Mammary epithelial cell (primary cell): ENCODE measurements at regions of chr12 and their contacts with region 1.

Region 1: GRCh38 chr12:117571321-117571720 is 209.9 kb upstream of the NOS1 start:
- DNase-seq: no peak
- H3K4me3 ChIP-seq: no peak overlapping the region
- H3K27ac ChIP-seq: no peak overlapping the region
- H3K4me1 ChIP-seq: no peaks in the 10 kb centered on the region
- H3K27me3 ChIP-seq: no peaks in the 10 kb centered on the region
- CTCF ChIP-seq: no peak

Region 2: GRCh38 chr12:117236456-117237001 is 334.8 kb before region 1 on chr12:
- CTCF ChIA-PET with region 1: no interaction called
- dilution Hi-C with region 1: loop called (anchors 10 kb)
- in situ Hi-C with region 1: no loop called
- intact Hi-C with region 1: no loop called
- DNase-seq: peak; percentile 19
- H3K4me3 ChIP-seq: no peak overlapping the region
- H3K27ac ChIP-seq: no peak overlapping the region
- H3K4me1 ChIP-seq: no peaks in the 10 kb centered on the region
- H3K27me3 ChIP-seq: no peaks in the 10 kb centered on the region
- CTCF ChIP-seq: peak; percentile 46 to 57

Region 3: GRCh38 chr12:117486840-117487659 is 84.3 kb before region 1 on chr12:
- CTCF ChIA-PET with region 1: no interaction called
- dilution Hi-C with region 1: loop called (anchors 5 kb)
- in situ Hi-C with region 1: no loop called
- intact Hi-C with region 1: no loop called
- DNase-seq: no peak
- H3K4me3 ChIP-seq: no peak overlapping the region
- H3K27ac ChIP-seq: no peak overlapping the region
- H3K4me1 ChIP-seq: no peaks in the 10 kb centered on the region
- H3K27me3 ChIP-seq: no peaks in the 10 kb centered on the region
- CTCF ChIP-seq: no peak

Region 4: DNA sequence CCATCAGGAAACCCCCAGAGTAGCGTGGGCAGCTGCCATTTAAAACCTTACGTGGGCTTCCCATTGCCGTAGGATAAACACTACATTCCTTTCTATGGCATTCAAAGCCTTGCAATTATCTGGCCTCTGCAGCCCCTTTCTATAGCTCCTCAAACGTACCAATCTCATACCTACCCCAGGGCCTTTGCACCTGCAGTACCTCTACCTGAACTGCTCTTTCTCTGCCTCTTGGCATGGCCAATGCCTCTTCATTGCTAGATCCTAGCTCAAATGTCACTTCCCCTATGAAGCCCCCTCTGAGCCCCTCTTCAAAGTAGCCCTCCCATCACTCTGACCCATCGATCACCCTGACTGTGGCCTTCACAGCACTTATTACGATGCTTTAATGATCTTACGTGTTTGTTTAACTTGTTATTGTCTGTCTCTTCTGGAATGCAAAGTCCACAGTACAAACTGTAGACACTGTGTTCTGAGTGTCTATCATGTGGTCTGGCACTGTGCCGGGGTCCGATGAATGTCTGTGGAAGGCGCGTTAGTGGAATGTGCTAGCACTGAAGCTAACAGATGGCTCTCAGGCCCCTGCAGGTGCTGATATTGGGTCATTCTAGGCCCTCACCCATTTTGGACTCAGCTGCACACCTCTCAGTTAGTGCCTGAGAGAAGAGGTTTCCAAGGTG is 52.6 kb before region 1 on chr12:
- CTCF ChIA-PET with region 1: no interaction called
- dilution Hi-C with region 1: no loop called
- in situ Hi-C with region 1: no loop called
- intact Hi-C with region 1: no loop called
- DNase-seq: no peak
- H3K4me3 ChIP-seq: no peak overlapping the region
- H3K27ac ChIP-seq: no peak overlapping the region
- H3K4me1 ChIP-seq: no peaks in the 10 kb centered on the region
- H3K27me3 ChIP-seq: no peaks in the 10 kb centered on the region
- CTCF ChIP-seq: no peak